Naive thymus-derived CD4-positive, alpha-beta T cell (primary cell): ENCODE measurements at regions of chr6 and their contacts with region 1.

Region 1: DNA sequence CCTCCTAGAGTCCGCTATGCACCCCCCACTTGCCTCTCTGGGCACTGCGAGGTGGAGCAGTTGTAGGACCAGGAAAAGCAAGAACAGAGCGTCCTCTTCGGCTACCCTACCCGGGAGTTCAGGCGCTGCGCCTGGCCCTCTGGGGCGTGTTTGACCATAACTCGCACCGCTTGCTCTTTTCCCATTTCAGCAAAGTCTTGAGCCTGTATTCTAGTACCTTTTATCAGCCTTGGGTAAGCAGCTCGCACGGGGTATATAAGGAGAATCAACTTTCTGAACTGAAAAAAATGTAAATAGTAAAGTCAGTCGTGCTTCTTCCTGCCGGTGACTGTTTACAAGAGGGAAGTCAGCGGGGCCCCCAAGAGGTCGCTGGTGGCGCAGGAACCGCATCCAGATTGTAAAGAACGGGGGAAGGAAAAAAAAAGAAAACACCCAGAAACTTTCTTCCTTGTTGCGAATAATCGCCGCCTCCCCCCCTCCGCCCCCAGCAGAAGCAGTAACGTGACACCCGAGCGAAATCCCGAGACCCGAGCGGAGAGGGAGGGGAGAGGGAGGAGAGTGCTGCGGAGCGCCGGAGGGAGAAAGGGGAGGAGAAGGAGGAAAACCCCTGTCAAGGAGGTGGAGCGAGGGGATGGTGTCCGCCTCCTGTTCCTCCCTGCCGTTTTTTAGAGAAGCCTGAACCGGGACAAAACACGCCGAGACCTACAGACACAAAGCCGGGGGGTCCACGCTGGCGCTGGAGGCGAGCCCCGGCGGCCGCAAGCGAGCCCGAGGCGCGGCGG is at the start of gene UST:
- DNase-seq: peak in 7 of 9 donors; percentile 17 to 58 (median 37)
- ATAC-seq: peak; percentile 65
- H3K4me3 ChIP-seq: peak within 1 kb of the TSS; percentile 65
- H3K4me3 Mint-ChIP-seq: peak within 1 kb of the TSS; percentile 86 to 95 (median 90)
- H3K27ac ChIP-seq: no peak within 1 kb of the TSS
- H3K27ac Mint-ChIP-seq: peak within 1 kb of the TSS in 6 of 9 donors; percentile 28 to 82 (median 74)
- H3K4me1 ChIP-seq: peaks cover 0 to 14% of the 10 kb centered on the region in 2 donors
- H3K4me1 Mint-ChIP-seq: peaks cover 12 to 22% (median 16%) of the 10 kb centered on the region in 7 donors
- H3K27me3 ChIP-seq: peaks cover 0 to 10% of the 10 kb centered on the region in 2 donors
- H3K27me3 Mint-ChIP-seq: peaks cover 65 to 80% (median 70%) of the 10 kb centered on the region in 5 donors
- total RNA-seq, gene UST: 0.35 to 2.6 (median 0.46) TPM

Region 2: DNA sequence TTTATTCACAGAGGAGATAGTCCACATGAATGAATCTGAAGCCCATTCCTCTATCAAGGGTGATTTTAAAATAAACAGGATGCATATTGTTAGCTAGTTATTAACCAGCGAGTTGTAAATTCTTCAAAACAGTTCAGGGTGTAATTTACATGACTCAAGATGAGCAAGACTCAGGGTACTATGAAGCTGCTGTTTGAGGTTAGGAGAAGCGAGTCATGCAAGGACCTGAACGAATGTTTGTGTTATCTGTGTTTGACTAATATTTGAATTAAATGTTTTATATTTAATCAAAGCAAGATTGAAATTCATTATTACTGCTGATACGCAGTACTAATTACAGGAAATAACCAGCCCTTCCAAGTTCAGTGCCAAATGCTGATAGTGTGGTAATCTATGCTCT is 1046.9 kb before region 1 on chr6:
- CTCF ChIA-PET with region 1: no interaction called
- POLR2A ChIA-PET with region 1: no interaction called
- intact Hi-C with region 1: no loop called
- DNase-seq: no peak
- ATAC-seq: no peak
- H3K4me3 ChIP-seq: no peak overlapping the region
- H3K4me3 Mint-ChIP-seq: no peak overlapping the region
- H3K27ac ChIP-seq: no peak overlapping the region
- H3K27ac Mint-ChIP-seq: no peak overlapping the region
- H3K4me1 ChIP-seq: no peaks in the 10 kb centered on the region
- H3K4me1 Mint-ChIP-seq: no peaks in the 10 kb centered on the region
- H3K27me3 ChIP-seq: no peaks in the 10 kb centered on the region
- H3K27me3 Mint-ChIP-seq: peaks cover 0 to 5% (median 0%) of the 10 kb centered on the region in 5 donors

Region 3: DNA sequence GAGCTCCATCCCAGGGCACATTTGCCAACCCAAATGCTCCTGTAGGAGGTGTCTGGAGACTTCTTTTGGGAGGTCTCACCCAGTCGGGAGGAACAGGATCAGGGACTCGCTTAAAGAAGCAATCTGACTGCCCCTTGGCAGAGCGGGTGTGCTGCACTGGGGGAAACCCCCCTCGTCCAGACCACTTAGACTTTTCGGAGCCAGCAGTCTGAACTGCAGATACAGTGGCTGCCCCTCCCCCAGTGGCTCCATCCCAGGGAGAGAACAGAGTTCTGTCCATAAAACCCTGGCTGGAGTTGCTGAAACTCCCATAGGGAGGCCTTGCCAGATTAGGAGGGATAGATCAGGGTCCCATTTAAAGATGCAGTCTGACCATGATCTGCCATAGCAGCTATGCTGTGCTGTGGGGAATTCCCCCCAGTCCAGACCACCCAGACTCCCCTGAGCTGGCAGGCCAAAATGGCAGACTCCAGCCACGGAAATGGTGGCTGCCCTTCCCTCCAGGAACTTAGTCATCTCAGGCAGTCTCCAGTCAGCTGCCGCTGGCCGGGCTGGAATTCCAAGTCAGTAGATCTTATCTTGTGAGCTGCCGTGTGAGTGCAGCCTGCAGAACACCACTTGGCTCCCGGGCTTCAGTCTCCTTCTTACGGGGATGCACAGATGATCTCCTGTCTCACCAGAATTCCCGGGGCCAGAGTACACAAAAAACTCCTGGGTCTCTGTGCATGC is 682.0 kb before region 1 on chr6:
- CTCF ChIA-PET with region 1: no interaction called
- POLR2A ChIA-PET with region 1: no interaction called
- intact Hi-C with region 1: no loop called
- DNase-seq: no peak
- ATAC-seq: no peak
- H3K4me3 ChIP-seq: no peak overlapping the region
- H3K4me3 Mint-ChIP-seq: no peak overlapping the region
- H3K27ac ChIP-seq: no peak overlapping the region
- H3K27ac Mint-ChIP-seq: no peak overlapping the region
- H3K4me1 ChIP-seq: no peaks in the 10 kb centered on the region
- H3K4me1 Mint-ChIP-seq: no peaks in the 10 kb centered on the region
- H3K27me3 ChIP-seq: no peaks in the 10 kb centered on the region
- H3K27me3 Mint-ChIP-seq: peaks cover 0 to 6% (median 0%) of the 10 kb centered on the region in 5 donors

Region 4: DNA sequence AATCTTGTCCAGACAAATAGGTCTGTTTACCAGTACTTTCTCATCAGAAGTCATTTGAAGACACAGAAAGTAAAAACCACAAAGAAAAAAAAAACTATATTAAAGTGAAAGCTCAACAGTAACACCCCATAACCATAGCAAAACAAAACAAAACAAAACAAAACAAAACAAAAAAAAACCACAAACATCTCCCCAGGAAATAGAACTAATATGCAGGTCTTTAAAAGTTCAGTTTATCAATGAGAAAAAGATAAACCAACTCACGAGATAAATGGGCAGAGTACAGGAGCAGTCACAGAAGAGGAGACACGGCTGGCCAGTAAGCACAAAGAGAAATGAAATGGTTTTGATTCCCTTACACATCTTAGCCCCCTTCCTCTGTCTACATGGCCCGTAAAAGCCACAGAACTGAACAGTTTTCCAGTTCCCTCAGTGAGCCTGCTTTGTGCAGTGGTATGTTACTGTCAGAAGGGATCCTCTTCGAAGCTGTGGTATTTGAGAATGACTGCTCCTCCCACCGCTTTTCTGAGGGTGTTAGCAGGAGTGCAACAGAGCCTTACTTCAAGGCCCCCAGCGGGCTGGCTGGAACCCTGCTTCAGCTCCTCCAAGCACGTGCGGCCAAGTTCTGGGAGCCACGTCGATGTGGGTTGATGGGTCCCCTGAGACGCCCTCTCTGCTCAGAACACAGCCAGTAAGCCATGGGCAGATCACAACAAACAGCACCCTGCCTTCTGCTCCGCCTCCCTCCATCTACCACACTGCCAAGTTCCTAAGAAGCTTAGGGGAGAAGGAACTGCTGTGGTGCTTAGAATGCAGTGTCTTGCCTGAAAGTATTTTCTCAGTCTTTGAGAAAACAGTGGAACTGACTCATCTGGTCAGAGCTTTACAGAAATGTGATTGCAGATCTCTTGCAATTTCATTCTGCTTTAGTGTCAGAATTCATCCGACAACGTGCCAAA is 14.3 kb after region 1 on chr6:
- CTCF ChIA-PET with region 1: interaction called, 4 read pairs
- POLR2A ChIA-PET with region 1: interaction called, 3 read pairs
- intact Hi-C with region 1: loop called in 1 of 2 experiments (anchors 1 kb)
- DNase-seq: peak in 8 of 9 donors; percentile 21 to 57 (median 28)
- ATAC-seq: peak; percentile 58
- H3K4me3 ChIP-seq: peak overlapping the region; percentile 46
- H3K4me3 Mint-ChIP-seq: peak overlapping the region; percentile 62 to 94 (median 81)
- H3K27ac ChIP-seq: peak overlapping the region; percentile 53
- H3K27ac Mint-ChIP-seq: peak overlapping the region; percentile 20 to 87 (median 81)
- H3K4me1 ChIP-seq: peaks cover 17 to 54% of the 10 kb centered on the region in 2 donors
- H3K4me1 Mint-ChIP-seq: peaks cover 20 to 52% (median 35%) of the 10 kb centered on the region in 7 donors
- H3K27me3 ChIP-seq: no peaks in the 10 kb centered on the region
- H3K27me3 Mint-ChIP-seq: peaks cover 8 to 76% (median 23%) of the 10 kb centered on the region in 5 donors

Region 5: GRCh38 chr6:148780918-148781436 is 34.4 kb after region 1 on chr6:
- CTCF ChIA-PET with region 1: interaction called, 3 read pairs
- POLR2A ChIA-PET with region 1: no interaction called
- intact Hi-C with region 1: loop called in 1 of 2 experiments (anchors 2 kb)
- DNase-seq: no peak
- ATAC-seq: no peak
- H3K4me3 ChIP-seq: no peak overlapping the region
- H3K4me3 Mint-ChIP-seq: peak overlapping the region in 5 of 10 donors; percentile 3 to 45 (median 8)
- H3K27ac ChIP-seq: no peak overlapping the region
- H3K27ac Mint-ChIP-seq: no peak overlapping the region
- H3K4me1 ChIP-seq: no peaks in the 10 kb centered on the region
- H3K4me1 Mint-ChIP-seq: peaks cover 0 to 7% (median 0%) of the 10 kb centered on the region in 7 donors
- H3K27me3 ChIP-seq: no peaks in the 10 kb centered on the region
- H3K27me3 Mint-ChIP-seq: peaks cover 5 to 17% (median 11%) of the 10 kb centered on the region in 5 donors

Region 6: DNA sequence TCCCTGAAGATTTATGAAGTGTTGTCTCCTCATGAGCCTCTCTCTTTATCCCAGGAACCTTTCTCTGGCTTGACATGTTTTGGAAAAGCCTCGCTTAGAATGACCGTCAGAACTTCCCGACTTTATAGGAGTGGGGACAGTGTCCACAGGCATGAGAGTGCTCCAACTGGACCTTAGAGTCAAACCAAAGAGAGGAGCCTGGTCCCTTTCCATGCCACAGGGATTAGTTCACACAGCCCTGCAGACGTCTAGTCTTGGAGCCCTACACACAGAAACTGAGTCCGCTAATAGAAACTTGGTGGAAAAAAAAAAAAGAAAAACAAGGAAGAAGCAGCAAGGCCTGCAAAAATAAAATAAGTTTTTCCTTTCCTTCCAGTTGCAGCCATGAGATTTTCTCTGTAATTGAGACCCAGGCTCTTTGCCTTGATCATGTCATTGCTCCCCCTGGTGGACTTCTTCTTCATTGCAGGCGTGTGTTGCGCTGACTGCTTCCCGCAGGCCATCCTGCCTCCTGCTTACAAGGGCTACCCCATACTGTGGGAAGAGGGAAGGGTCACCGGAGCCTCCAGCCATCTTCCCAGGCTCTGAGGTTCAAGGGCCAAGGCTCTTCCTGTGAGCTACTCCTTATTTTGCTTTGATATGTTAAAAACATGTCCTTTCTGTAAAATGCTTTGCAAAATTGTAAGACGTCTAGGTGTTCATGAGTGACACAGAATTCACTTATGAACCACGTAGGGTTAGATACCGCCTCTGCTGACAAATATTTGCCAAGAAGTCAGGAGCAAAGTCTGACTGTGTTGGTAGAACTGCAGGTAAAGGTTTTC is 201.3 kb after region 1 on chr6:
- CTCF ChIA-PET with region 1: no interaction called
- POLR2A ChIA-PET with region 1: no interaction called
- intact Hi-C with region 1: loop called (anchors 1 kb)
- DNase-seq: peak; percentile 39 to 78 (median 59)
- ATAC-seq: peak; percentile 90
- H3K4me3 ChIP-seq: no peak overlapping the region
- H3K4me3 Mint-ChIP-seq: no peak overlapping the region
- H3K27ac ChIP-seq: no peak overlapping the region
- H3K27ac Mint-ChIP-seq: peak overlapping the region in 1 of 9 donors; percentile 41
- H3K4me1 ChIP-seq: no peaks in the 10 kb centered on the region
- H3K4me1 Mint-ChIP-seq: peaks cover 0 to 5% (median 0%) of the 10 kb centered on the region in 7 donors
- H3K27me3 ChIP-seq: no peaks in the 10 kb centered on the region
- H3K27me3 Mint-ChIP-seq: peaks cover 5 to 30% (median 13%) of the 10 kb centered on the region in 5 donors